ENCODE measurements at regions of chr2 and their contacts with region 1.

Region 1: GRCh38 chr2:231557571-231558237 is 27.5 kb upstream of the NMUR1 start:
- DNase-seq: peak; percentile 74
- H3K4me3 ChIP-seq: no peak overlapping the region
- H3K27ac ChIP-seq: no peak overlapping the region
- H3K4me1 ChIP-seq: peaks cover 5% of the 10 kb centered on the region
- H3K27me3 ChIP-seq: no peaks in the 10 kb centered on the region
- CTCF ChIP-seq: peak; percentile 64 to 72
- POLR2A ChIP-seq: no peak

Region 2: DNA sequence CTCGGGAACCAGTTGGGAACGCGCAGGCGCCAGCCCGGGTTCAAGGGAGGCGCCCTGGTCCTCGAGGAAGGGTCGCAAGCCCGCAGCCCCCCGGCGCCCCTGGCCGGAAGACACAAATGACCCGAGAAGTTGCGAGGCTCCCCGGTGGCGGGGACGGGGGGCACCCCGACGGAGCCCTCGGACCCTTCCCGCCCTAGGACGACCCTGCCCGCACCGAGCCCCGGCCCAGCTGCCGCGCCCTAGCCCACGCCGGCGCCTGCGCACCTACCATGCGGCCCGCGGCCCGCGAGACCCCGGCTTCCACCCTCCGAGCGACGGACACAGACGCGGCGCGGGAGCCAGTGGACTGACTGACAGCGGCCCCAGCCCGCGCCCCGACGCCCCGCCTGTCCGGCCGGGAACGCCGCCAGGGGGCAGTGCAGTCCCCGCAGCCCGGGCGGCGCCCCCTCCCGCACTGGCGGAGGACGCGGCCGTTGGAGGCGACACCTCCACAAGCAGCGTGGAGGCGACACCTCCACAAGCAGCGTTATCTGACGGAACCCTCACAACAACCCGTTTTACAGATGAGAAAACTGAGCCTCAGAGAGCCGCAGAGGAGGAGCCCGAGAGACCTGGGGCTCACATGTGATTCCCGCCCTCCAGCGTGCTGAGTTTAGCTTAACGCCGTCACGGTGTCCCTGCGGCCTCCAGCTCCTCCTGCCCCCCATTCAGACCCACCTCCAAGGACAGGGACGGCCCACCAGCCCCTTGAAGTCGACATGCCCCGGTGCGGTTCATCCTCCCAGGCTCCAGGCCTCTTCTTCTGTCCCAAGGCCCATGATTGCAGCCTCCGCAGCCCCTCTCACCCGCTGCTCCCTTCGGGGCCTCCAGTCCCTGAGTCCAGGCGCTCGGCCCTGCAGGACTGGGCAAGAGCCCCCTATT is 27.4 kb before region 1 on chr2 and contains the start of gene NMUR1:
- CTCF ChIA-PET with region 1: interaction called, 10 read pairs
- POLR2A ChIA-PET with region 1: no interaction called
- dilution Hi-C with region 1: no loop called
- intact Hi-C with region 1: loop called (anchors 1 kb)
- DNase-seq: peak; percentile 39
- H3K4me3 ChIP-seq: no peak within 1 kb of the TSS
- H3K27ac ChIP-seq: no peak within 1 kb of the TSS
- H3K4me1 ChIP-seq: peaks cover 3% of the 10 kb centered on the region
- H3K27me3 ChIP-seq: peaks cover 9 to 13% of the 10 kb centered on the region in 2 experiments
- CTCF ChIP-seq: peak; percentile 72 to 91
- POLR2A ChIP-seq: no peak
- total RNA-seq, gene NMUR1: not detected in 2 replicates